CD8-positive, alpha-beta memory T cell (primary cell): ENCODE measurements at regions of chr11 and their contacts with region 1.

Region 1: DNA sequence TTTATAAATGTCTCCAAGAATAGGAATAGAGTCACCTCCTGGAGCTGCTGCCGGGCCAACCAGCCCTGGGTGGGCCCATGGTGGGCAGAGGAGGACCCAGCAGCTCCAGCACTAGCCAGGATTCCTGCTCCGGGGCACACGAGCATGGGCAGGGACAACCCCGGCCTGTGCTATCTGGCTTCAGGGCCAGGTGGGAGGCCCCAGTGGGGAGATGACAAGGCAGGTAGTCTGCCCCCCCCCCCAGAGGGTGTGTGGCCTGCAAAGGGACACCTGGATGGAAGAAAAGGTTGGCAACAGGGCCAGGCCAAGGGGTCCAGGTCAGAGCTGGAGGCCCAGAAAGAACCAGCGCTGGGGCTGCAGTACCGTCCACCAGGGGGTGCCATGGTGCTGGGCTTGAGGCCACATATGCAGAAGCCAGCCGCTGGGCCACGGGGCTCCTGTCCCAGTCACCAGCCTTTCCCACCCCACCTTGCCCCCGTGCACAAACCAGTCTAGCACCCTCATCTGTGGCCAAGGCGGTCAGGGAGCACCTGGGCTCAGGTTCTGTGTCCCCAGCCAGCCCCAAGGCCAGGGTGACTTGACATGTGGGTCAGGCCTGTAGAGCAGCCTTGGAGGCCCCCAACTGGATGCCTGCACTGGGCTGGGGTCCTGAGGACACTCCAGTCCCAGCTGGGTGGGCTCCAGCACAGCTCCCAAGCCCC is 3.5 kb downstream of the TSPAN32 start:
- DNase-seq: peak; percentile 71 to 88 (median 78)
- H3K4me3 ChIP-seq: peak overlapping the region; percentile 70
- H3K4me3 Mint-ChIP-seq: peak overlapping the region; percentile 77 to 98 (median 94)
- H3K27ac ChIP-seq: peak overlapping the region; percentile 67
- H3K27ac Mint-ChIP-seq: peak overlapping the region; percentile 77 to 97 (median 90)
- H3K4me1 ChIP-seq: peaks cover 53% of the 10 kb centered on the region
- H3K4me1 Mint-ChIP-seq: peaks cover 26 to 68% (median 37%) of the 10 kb centered on the region in 3 donors
- H3K27me3 ChIP-seq: no peaks in the 10 kb centered on the region
- H3K27me3 Mint-ChIP-seq: no peaks in the 10 kb centered on the region

Region 2: GRCh38 chr11:2202055-2202899 is 103.0 kb before region 1 on chr11:
- CTCF ChIA-PET with region 1: interaction called, 21 read pairs
- POLR2A ChIA-PET with region 1: no interaction called
- DNase-seq: no peak
- H3K4me3 ChIP-seq: no peak overlapping the region
- H3K4me3 Mint-ChIP-seq: no peak overlapping the region
- H3K27ac ChIP-seq: no peak overlapping the region
- H3K27ac Mint-ChIP-seq: no peak overlapping the region
- H3K4me1 ChIP-seq: no peaks in the 10 kb centered on the region
- H3K4me1 Mint-ChIP-seq: no peaks in the 10 kb centered on the region
- H3K27me3 ChIP-seq: no peaks in the 10 kb centered on the region
- H3K27me3 Mint-ChIP-seq: peaks cover 1 to 4% of the 10 kb centered on the region in 2 donors

Region 3: DNA sequence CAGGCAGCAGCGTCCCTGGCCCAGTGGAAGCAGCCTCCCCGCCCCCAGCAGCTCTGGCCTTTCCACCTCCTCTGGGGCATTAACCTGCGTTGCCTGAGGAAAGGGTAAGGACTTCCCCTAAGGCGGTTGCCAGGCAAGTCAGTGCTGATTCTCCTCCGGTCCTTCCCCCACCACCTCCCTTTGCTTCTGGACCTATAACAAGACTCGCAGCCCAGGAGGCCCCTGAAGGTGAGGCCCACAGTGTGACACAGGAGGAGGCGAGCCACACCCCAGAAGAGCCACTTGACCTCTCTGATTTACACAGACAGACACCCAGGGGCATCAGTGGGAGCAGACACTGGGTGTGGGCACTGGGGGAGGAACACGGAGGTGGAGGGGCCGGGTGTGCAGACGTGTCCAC is 70.3 kb before region 1 on chr11:
- CTCF ChIA-PET with region 1: no interaction called
- POLR2A ChIA-PET with region 1: no interaction called
- DNase-seq: no peak
- H3K4me3 ChIP-seq: no peak overlapping the region
- H3K4me3 Mint-ChIP-seq: no peak overlapping the region
- H3K27ac ChIP-seq: no peak overlapping the region
- H3K27ac Mint-ChIP-seq: no peak overlapping the region
- H3K4me1 ChIP-seq: no peaks in the 10 kb centered on the region
- H3K4me1 Mint-ChIP-seq: no peaks in the 10 kb centered on the region
- H3K27me3 ChIP-seq: no peaks in the 10 kb centered on the region
- H3K27me3 Mint-ChIP-seq: peaks cover 9 to 27% of the 10 kb centered on the region in 2 donors

Region 4: GRCh38 chr11:2377511-2378443 is 72.5 kb after region 1 on chr11:
- CTCF ChIA-PET with region 1: interaction called, 22 read pairs
- POLR2A ChIA-PET with region 1: interaction called, 19 read pairs
- DNase-seq: peak; percentile 46 to 78 (median 55)
- H3K4me3 ChIP-seq: peak overlapping the region; percentile 74
- H3K4me3 Mint-ChIP-seq: peak overlapping the region; percentile 80 to 93 (median 87)
- H3K27ac ChIP-seq: peak overlapping the region; percentile 79
- H3K27ac Mint-ChIP-seq: peak overlapping the region; percentile 6 to 92 (median 85)
- H3K4me1 ChIP-seq: peaks cover 27% of the 10 kb centered on the region
- H3K4me1 Mint-ChIP-seq: peaks cover 23 to 51% (median 34%) of the 10 kb centered on the region in 3 donors
- H3K27me3 ChIP-seq: no peaks in the 10 kb centered on the region
- H3K27me3 Mint-ChIP-seq: peaks cover 0 to 3% of the 10 kb centered on the region in 2 donors

Region 5: GRCh38 chr11:2400069-2400760 is 94.9 kb after region 1 on chr11 and contains the start of gene TSSC4:
- CTCF ChIA-PET with region 1: interaction called, 53 read pairs
- POLR2A ChIA-PET with region 1: interaction called, 9 read pairs
- DNase-seq: peak; percentile 99 to 100 (median 100)
- H3K4me3 ChIP-seq: peak within 1 kb of the TSS; percentile 89
- H3K4me3 Mint-ChIP-seq: peak within 1 kb of the TSS; percentile 88 to 99 (median 91)
- H3K27ac ChIP-seq: peak within 1 kb of the TSS; percentile 97
- H3K27ac Mint-ChIP-seq: peak within 1 kb of the TSS; percentile 90 to 98 (median 96)
- H3K4me1 ChIP-seq: peaks cover 24% of the 10 kb centered on the region
- H3K4me1 Mint-ChIP-seq: peaks cover 10 to 34% (median 15%) of the 10 kb centered on the region in 3 donors
- H3K27me3 ChIP-seq: no peaks in the 10 kb centered on the region
- H3K27me3 Mint-ChIP-seq: peaks cover 0 to 3% of the 10 kb centered on the region in 2 donors
- total RNA-seq, gene TSSC4: 79.6 to 84.1 TPM